ENCODE measurements at regions of chr4 and their contacts with region 1.

Region 1: GRCh38 chr4:113278324-113278934 is 229.0 kb downstream of the ANK2 start:
- DNase-seq: peak; percentile 70
- H3K4me3 ChIP-seq: no peak overlapping the region
- H3K27ac ChIP-seq: no peak overlapping the region
- H3K4me1 ChIP-seq: no peaks in the 10 kb centered on the region
- H3K27me3 ChIP-seq: peaks cover 5 to 19% of the 10 kb centered on the region in 2 experiments
- CTCF ChIP-seq: peak; percentile 86 to 87
- POLR2A ChIP-seq: no peak

Region 2: GRCh38 chr4:113256946-113257345 is 21.5 kb before region 1 on chr4:
- CTCF ChIA-PET with region 1: interaction called, 11 read pairs
- POLR2A ChIA-PET with region 1: no interaction called
- dilution Hi-C with region 1: no loop called
- intact Hi-C with region 1: no loop called
- DNase-seq: no peak
- H3K4me3 ChIP-seq: no peak overlapping the region
- H3K27ac ChIP-seq: no peak overlapping the region
- H3K4me1 ChIP-seq: no peaks in the 10 kb centered on the region
- H3K27me3 ChIP-seq: no peaks in the 10 kb centered on the region
- CTCF ChIP-seq: no peak
- POLR2A ChIP-seq: no peak

Region 3: DNA sequence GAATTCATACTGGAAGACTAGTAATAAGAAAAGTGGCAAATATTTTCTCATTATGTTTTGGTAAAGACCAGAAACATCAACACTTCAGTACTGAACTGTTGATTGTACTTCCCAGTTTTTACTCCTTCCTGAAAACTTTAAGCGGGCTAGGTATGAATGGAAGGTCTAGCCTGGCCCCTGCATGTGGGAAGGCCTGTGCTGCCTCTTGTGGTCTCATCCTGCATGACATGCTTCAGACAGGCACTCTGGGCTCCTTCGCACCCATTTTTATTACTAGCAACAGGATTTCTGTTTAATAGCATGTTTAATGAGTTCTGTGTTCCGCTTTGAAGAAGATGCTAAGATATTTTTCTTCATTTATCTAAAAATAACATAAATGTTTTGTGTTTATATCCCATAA is 50.1 kb after region 1 on chr4:
- CTCF ChIA-PET with region 1: no interaction called
- POLR2A ChIA-PET with region 1: no interaction called
- dilution Hi-C with region 1: no loop called
- intact Hi-C with region 1: loop called (anchors 2 kb)
- DNase-seq: no peak
- H3K4me3 ChIP-seq: no peak overlapping the region
- H3K27ac ChIP-seq: no peak overlapping the region
- H3K4me1 ChIP-seq: no peaks in the 10 kb centered on the region
- H3K27me3 ChIP-seq: peaks cover 0 to 2% of the 10 kb centered on the region in 2 experiments
- CTCF ChIP-seq: peak; percentile 35 to 53
- POLR2A ChIP-seq: no peak

Region 4: GRCh38 chr4:113368056-113368455 is 89.6 kb after region 1 on chr4:
- CTCF ChIA-PET with region 1: no interaction called
- POLR2A ChIA-PET with region 1: no interaction called
- dilution Hi-C with region 1: no loop called
- intact Hi-C with region 1: no loop called
- DNase-seq: no peak
- H3K4me3 ChIP-seq: no peak overlapping the region
- H3K27ac ChIP-seq: no peak overlapping the region
- H3K4me1 ChIP-seq: no peaks in the 10 kb centered on the region
- H3K27me3 ChIP-seq: no peaks in the 10 kb centered on the region
- CTCF ChIP-seq: no peak
- POLR2A ChIP-seq: no peak

Region 5: GRCh38 chr4:113952452-113953029 is 674.1 kb after region 1 on chr4:
- CTCF ChIA-PET with region 1: no interaction called
- POLR2A ChIA-PET with region 1: no interaction called
- dilution Hi-C with region 1: no loop called
- intact Hi-C with region 1: loop called (anchors 5 kb)
- DNase-seq: peak; percentile 78
- H3K4me3 ChIP-seq: no peak overlapping the region
- H3K27ac ChIP-seq: no peak overlapping the region
- H3K4me1 ChIP-seq: peaks cover 20% of the 10 kb centered on the region
- H3K27me3 ChIP-seq: no peaks in the 10 kb centered on the region
- CTCF ChIP-seq: peak; percentile 64 to 72
- POLR2A ChIP-seq: no peak

Region 6: DNA sequence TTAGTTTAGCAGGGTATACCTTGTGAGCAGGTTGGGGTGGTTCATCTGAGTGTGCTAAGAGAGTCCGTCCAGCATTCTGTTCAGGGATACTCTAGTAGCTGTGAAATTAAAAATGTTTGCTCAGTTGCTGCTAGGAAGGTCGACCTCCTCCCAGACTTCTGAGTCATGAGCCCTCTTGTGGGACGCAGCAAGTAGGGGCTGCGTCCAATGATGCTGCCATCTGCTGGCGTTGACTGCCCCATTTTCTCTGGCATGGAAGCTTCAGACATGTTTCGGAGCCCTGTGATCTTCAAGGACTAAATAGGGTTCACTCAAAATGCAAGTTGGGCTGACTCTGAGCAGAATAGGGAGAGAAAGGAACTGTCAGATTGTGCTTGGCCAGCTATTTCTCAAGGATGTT is 902.1 kb after region 1 on chr4:
- CTCF ChIA-PET with region 1: no interaction called
- POLR2A ChIA-PET with region 1: no interaction called
- dilution Hi-C with region 1: no loop called
- intact Hi-C with region 1: loop called (anchors 5 kb)
- DNase-seq: peak; percentile 87
- H3K4me3 ChIP-seq: no peak overlapping the region
- H3K27ac ChIP-seq: no peak overlapping the region
- H3K4me1 ChIP-seq: no peaks in the 10 kb centered on the region
- H3K27me3 ChIP-seq: no peaks in the 10 kb centered on the region
- CTCF ChIP-seq: peak; percentile 69 to 79
- POLR2A ChIP-seq: no peak

Region 7: GRCh38 chr4:114694770-114695169 is 1416.3 kb after region 1 on chr4:
- CTCF ChIA-PET with region 1: interaction called, 5 read pairs
- POLR2A ChIA-PET with region 1: no interaction called
- dilution Hi-C with region 1: no loop called
- intact Hi-C with region 1: loop called (anchors 2 kb)
- DNase-seq: peak; percentile 58
- H3K4me3 ChIP-seq: no peak overlapping the region
- H3K27ac ChIP-seq: no peak overlapping the region
- H3K4me1 ChIP-seq: peaks cover 4% of the 10 kb centered on the region
- H3K27me3 ChIP-seq: peaks cover 0 to 1% of the 10 kb centered on the region in 2 experiments
- CTCF ChIP-seq: peak; percentile 16
- POLR2A ChIP-seq: no peak

Measured in endothelial cell of umbilical vein (primary cell).